Caco-2 (cell line): ENCODE measurements at regions of chr1 and their contacts with region 1.

Region 1: GRCh38 chr1:42681741-42682483 is at the start of gene YBX1:
- DNase-seq: peak; percentile 96
- H3K4me3 ChIP-seq: peak within 1 kb of the TSS; percentile 86
- H3K4me3 Mint-ChIP-seq: peak within 1 kb of the TSS; percentile 87
- H3K27ac Mint-ChIP-seq: peak within 1 kb of the TSS; percentile 97
- H3K4me1 ChIP-seq: peaks cover 27% of the 10 kb centered on the region
- H3K4me1 Mint-ChIP-seq: peaks cover 28% of the 10 kb centered on the region
- H3K27me3 ChIP-seq: no peaks in the 10 kb centered on the region
- H3K27me3 Mint-ChIP-seq: no peaks in the 10 kb centered on the region
- CTCF ChIP-seq: no peak
- total RNA-seq, gene YBX1: 567 and 622 TPM in 2 replicates

Region 2: DNA sequence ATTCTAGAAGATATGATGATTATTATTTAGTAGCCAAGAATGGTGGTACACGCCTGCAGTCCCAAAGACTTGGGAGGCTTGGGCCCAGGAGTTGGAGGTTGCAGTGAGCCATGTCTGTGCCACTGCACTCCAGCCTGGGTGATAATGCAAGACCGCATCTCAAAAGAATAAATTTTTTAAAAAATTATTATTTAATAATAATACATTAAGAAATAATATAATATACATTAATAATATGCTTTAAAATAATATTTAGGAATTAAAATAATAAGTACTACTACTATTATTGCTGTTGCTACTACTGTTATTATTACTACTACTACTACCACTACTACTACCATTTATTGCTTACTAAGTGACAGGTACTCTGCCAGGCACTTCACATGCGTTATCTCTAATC is 191.7 kb before region 1 on chr1:
- CTCF ChIA-PET with region 1: no interaction called
- POLR2A ChIA-PET with region 1: no interaction called
- intact Hi-C with region 1: no loop called
- DNase-seq: no peak
- H3K4me3 ChIP-seq: no peak overlapping the region
- H3K4me3 Mint-ChIP-seq: no peak overlapping the region
- H3K27ac Mint-ChIP-seq: no peak overlapping the region
- H3K4me1 ChIP-seq: no peaks in the 10 kb centered on the region
- H3K4me1 Mint-ChIP-seq: no peaks in the 10 kb centered on the region
- H3K27me3 ChIP-seq: no peaks in the 10 kb centered on the region
- H3K27me3 Mint-ChIP-seq: no peaks in the 10 kb centered on the region
- CTCF ChIP-seq: no peak

Region 3: GRCh38 chr1:42551180-42551579 is 130.7 kb before region 1 on chr1:
- CTCF ChIA-PET with region 1: no interaction called
- POLR2A ChIA-PET with region 1: no interaction called
- intact Hi-C with region 1: no loop called
- DNase-seq: no peak
- H3K4me3 ChIP-seq: no peak overlapping the region
- H3K4me3 Mint-ChIP-seq: no peak overlapping the region
- H3K27ac Mint-ChIP-seq: no peak overlapping the region
- H3K4me1 ChIP-seq: no peaks in the 10 kb centered on the region
- H3K4me1 Mint-ChIP-seq: no peaks in the 10 kb centered on the region
- H3K27me3 ChIP-seq: no peaks in the 10 kb centered on the region
- H3K27me3 Mint-ChIP-seq: peaks cover 2% of the 10 kb centered on the region
- CTCF ChIP-seq: no peak

Region 4: GRCh38 chr1:42657971-42658879 is 23.7 kb before region 1 on chr1 and contains the start of gene PPIH:
- CTCF ChIA-PET with region 1: interaction called, 4 read pairs
- POLR2A ChIA-PET with region 1: interaction called, 17 read pairs
- intact Hi-C with region 1: loop called (anchors 1 kb)
- DNase-seq: peak; percentile 93
- H3K4me3 ChIP-seq: peak within 1 kb of the TSS; percentile 88
- H3K4me3 Mint-ChIP-seq: peak within 1 kb of the TSS; percentile 99
- H3K27ac Mint-ChIP-seq: peak within 1 kb of the TSS; percentile 93
- H3K4me1 ChIP-seq: peaks cover 4% of the 10 kb centered on the region; the same call in 1 of the 2 replicates
- H3K4me1 Mint-ChIP-seq: peaks cover 6% of the 10 kb centered on the region
- H3K27me3 ChIP-seq: no peaks in the 10 kb centered on the region
- H3K27me3 Mint-ChIP-seq: no peaks in the 10 kb centered on the region
- CTCF ChIP-seq: no peak
- total RNA-seq, gene PPIH: 54.7 and 58.2 TPM in 2 replicates

Region 5: DNA sequence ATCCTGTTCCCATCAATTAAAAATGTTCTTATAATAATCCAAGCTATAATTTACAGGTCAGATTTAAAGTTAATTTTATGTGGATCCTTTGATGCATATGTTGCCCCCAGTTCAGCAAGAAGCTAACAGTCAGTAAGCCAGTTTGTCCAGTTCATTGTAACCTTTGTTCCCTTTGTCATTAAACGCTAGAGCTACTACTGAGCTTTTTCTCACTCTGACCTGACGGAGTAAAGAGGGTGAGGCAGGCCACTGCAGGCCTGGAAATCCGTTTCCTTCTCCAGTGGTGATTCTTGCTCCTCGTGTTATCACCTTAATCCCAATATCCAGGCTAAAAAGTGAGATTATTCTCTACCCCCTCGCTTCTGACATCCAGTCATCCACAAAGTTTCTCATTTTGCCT is 10.5 kb after region 1 on chr1:
- CTCF ChIA-PET with region 1: interaction called, 5 read pairs
- POLR2A ChIA-PET with region 1: interaction called, 20 read pairs
- intact Hi-C with region 1: no loop called
- DNase-seq: peak in 1 of 2 experiments; percentile 49
- H3K4me3 ChIP-seq: no peak overlapping the region
- H3K4me3 Mint-ChIP-seq: peak overlapping the region; percentile 61
- H3K27ac Mint-ChIP-seq: peak overlapping the region; percentile 60
- H3K4me1 ChIP-seq: peaks cover 38% of the 10 kb centered on the region
- H3K4me1 Mint-ChIP-seq: peaks cover 26% of the 10 kb centered on the region
- H3K27me3 ChIP-seq: no peaks in the 10 kb centered on the region
- H3K27me3 Mint-ChIP-seq: no peaks in the 10 kb centered on the region
- CTCF ChIP-seq: no peak

Region 6: GRCh38 chr1:42730988-42731387 is 49.1 kb after region 1 on chr1:
- CTCF ChIA-PET with region 1: interaction called, 4 read pairs
- POLR2A ChIA-PET with region 1: interaction called, 18 read pairs
- intact Hi-C with region 1: no loop called
- DNase-seq: peak in 1 of 2 experiments; percentile 55
- H3K4me3 ChIP-seq: no peak overlapping the region
- H3K4me3 Mint-ChIP-seq: no peak overlapping the region
- H3K27ac Mint-ChIP-seq: no peak overlapping the region
- H3K4me1 ChIP-seq: peaks cover 11% of the 10 kb centered on the region; the same call in 1 of the 2 replicates
- H3K4me1 Mint-ChIP-seq: no peaks in the 10 kb centered on the region
- H3K27me3 ChIP-seq: no peaks in the 10 kb centered on the region
- H3K27me3 Mint-ChIP-seq: no peaks in the 10 kb centered on the region
- CTCF ChIP-seq: peak in 1 of 2 experiments; percentile 25

Region 7: GRCh38 chr1:42747125-42747524 is 65.2 kb after region 1 on chr1:
- CTCF ChIA-PET with region 1: no interaction called
- POLR2A ChIA-PET with region 1: no interaction called
- intact Hi-C with region 1: no loop called
- DNase-seq: peak; percentile 22 to 40
- H3K4me3 ChIP-seq: no peak overlapping the region
- H3K4me3 Mint-ChIP-seq: no peak overlapping the region
- H3K27ac Mint-ChIP-seq: no peak overlapping the region
- H3K4me1 ChIP-seq: no peaks in the 10 kb centered on the region
- H3K4me1 Mint-ChIP-seq: peaks cover 9% of the 10 kb centered on the region
- H3K27me3 ChIP-seq: no peaks in the 10 kb centered on the region
- H3K27me3 Mint-ChIP-seq: no peaks in the 10 kb centered on the region
- CTCF ChIP-seq: peak; percentile 58 to 69

Region 8: DNA sequence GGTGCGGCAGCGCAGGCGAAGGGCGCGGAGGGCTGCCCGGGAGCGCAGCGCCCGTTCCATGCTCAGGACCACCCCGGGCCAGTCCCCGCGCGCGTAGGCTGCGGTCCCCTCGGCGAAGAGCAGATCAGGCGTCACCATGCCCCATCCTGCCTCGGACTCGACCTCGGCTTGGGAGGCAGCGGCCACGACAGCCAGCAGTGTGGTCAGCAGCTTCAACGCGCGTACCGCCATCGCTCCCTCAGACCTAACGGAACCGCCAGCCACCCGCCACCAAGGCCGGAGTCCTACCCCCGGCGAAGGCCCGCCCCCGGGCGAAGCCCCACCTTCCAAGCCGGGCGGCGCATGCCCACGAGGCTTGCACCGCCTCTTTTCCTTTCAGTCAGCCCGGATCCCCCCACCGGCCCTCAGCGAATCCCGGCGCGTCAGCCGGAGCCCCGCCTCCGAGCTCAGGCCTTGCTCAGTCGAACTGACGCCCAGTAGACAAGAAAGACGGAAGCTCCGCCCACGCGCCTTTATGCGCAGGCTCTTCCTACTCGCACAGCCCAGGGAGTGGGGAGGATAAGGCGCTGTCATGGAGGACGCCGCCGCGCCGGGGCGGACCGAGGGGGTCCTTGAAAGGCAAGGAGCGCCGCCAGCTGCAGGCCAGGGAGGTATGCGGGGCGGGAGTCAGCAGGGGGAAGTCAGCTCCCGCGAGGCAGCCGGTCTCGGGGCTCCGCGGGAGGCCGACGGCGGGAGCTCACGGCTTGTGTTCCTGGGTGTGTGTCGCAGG is 85.0 kb after region 1 on chr1 and contains the starts of genes C1orf50 and P3H1:
- CTCF ChIA-PET with region 1: no interaction called
- POLR2A ChIA-PET with region 1: interaction called, 14 read pairs
- intact Hi-C with region 1: no loop called
- DNase-seq: peak; percentile 98 to 99
- H3K4me3 ChIP-seq: peak within 1 kb of the TSS; percentile 90
- H3K4me3 Mint-ChIP-seq: no peak within 1 kb of the TSS
- H3K27ac Mint-ChIP-seq: peak within 1 kb of the TSS; percentile 80
- H3K4me1 ChIP-seq: peaks cover 13% of the 10 kb centered on the region
- H3K4me1 Mint-ChIP-seq: no peaks in the 10 kb centered on the region
- H3K27me3 ChIP-seq: no peaks in the 10 kb centered on the region
- H3K27me3 Mint-ChIP-seq: no peaks in the 10 kb centered on the region
- CTCF ChIP-seq: no peak
- total RNA-seq, gene C1orf50: 6.1 and 6.3 TPM in 2 replicates
- total RNA-seq, gene P3H1: 20.5 and 21.2 TPM in 2 replicates